ENCODE measurements at regions of chr11 and their contacts with region 1.

Region 1: DNA sequence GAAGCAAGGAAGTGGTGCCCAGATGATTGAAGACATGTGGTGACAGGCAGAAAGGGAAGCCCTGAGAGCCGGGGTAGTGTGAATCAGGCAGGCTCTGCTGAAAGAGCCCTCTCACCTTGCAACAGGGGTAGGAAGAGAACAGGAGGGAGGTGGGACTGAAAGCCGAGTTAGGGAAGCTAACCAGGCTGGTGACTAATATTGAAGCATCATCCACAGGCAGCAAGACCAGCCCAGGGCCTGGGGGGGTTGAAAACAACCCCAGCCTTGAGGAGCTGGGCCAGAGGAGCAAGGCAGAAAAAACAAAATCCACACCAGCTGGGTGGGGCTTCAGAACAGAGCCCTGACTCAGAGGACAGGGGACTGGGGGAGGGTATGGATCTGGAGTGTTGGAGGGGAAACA is 35.0 kb upstream of the CRTAM start:
- DNase-seq: peak; percentile 82 to 97
- H3K4me3 ChIP-seq: no peak overlapping the region; the same call in 1 of the 2 replicates
- H3K27ac ChIP-seq: peak overlapping the region; percentile 96
- H3K4me1 ChIP-seq: peaks cover 51% of the 10 kb centered on the region
- H3K27me3 ChIP-seq: no peaks in the 10 kb centered on the region
- CTCF ChIP-seq: no peak

Region 2: GRCh38 chr11:122769126-122769780 is 34.1 kb before region 1 on chr11:
- CTCF ChIA-PET with region 1: no interaction called
- POLR2A ChIA-PET with region 1: no interaction called
- intact Hi-C with region 1: no loop called
- DNase-seq: no peak
- H3K4me3 ChIP-seq: no peak overlapping the region
- H3K27ac ChIP-seq: no peak overlapping the region
- H3K4me1 ChIP-seq: peaks cover 7% of the 10 kb centered on the region; the same call in 1 of the 2 replicates
- H3K27me3 ChIP-seq: no peaks in the 10 kb centered on the region
- CTCF ChIP-seq: no peak

Region 3: DNA sequence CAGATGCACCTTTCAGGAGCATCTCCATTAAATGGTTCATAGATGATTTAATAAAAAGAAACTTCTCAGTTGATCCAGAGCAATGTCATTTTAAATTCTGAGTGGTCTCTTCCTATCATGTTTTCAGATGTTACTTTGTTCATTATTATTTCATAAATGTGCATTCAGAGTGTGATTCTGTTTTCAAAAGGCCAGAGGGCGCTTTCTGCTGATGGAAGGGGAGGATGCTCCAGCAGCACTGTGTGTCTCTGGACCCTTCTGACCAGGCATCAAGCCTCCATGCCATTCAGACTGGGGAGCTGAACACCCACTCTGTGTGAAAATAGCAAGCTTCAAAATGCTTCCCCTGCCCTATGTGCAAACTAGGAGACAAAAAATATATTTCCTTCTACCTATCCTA is 11.1 kb after region 1 on chr11:
- CTCF ChIA-PET with region 1: no interaction called
- POLR2A ChIA-PET with region 1: interaction called, 8 read pairs
- intact Hi-C with region 1: loop called (anchors 1 kb)
- DNase-seq: no peak
- H3K4me3 ChIP-seq: no peak overlapping the region
- H3K27ac ChIP-seq: peak overlapping the region; percentile 97
- H3K4me1 ChIP-seq: peaks cover 38% of the 10 kb centered on the region
- H3K27me3 ChIP-seq: no peaks in the 10 kb centered on the region
- CTCF ChIP-seq: peak; percentile 36; the same call in 1 of the 2 replicates

Measured in PC-9 (cell line).